ENCODE measurements at regions of chr17 and their contacts with region 1.

Region 1: GRCh38 chr17:75589012-75589918 is 1.7 kb downstream of the MYO15B start:
- DNase-seq: peak; percentile 96
- H3K4me3 ChIP-seq: peak overlapping the region; percentile 52 to 56
- H3K27ac ChIP-seq: peak overlapping the region; percentile 83 to 90
- H3K4me1 ChIP-seq: peaks cover 10% of the 10 kb centered on the region
- H3K27me3 ChIP-seq: no peaks in the 10 kb centered on the region
- CTCF ChIP-seq: peak; percentile 87 to 94 (median 92)
- POLR2A ChIP-seq: peak; percentile 67

Region 2: DNA sequence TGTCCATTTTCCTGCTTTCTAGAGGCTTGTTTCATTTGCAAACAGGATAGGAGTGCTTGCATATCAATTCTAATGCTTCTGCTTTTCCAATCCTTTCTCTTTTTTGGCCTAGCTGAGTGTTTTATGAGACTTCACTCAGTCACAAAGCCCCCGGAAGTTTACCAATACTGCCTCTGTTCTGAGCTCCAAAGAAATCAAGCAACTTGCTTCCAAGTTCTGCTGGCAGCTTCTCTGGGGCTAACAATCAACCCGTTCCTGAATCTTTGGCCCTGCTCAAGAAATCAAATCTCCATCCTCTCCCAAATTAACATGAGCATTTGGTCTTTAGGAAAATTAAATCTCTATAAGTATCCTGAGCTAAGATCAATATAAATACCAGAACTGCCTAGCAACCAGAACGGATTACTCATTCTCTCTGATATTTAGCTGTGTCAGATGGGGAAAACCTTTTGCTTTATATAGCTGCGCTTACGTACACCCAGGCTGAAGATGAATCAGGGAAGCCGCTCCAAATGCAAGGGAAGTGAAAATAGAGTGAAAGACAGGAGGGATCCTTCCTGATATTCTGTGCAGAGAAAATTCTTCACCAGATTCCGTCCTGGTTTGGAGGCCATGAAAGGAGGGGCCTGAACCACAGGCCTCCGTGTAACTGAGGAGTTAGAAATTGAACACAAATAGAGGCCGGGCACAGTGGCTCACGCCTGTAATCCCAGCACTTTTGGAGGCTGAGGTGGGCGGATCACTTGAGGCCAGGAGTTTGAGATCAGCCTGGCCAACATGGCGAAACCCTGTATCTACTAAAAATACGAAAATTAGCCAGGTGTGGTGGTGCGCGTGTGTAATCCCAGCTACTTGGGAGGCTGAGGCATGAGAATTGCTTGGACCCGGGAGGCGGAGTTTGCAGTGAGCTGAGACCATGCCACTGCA is 160.5 kb before region 1 on chr17:
- intact Hi-C with region 1: loop called (anchors 5 kb)
- DNase-seq: no peak
- H3K4me3 ChIP-seq: no peak overlapping the region
- H3K27ac ChIP-seq: peak overlapping the region; percentile 29 to 56
- H3K4me1 ChIP-seq: no peaks in the 10 kb centered on the region
- H3K27me3 ChIP-seq: no peaks in the 10 kb centered on the region
- CTCF ChIP-seq: no peak
- POLR2A ChIP-seq: no peak